ENCODE measurements at regions of chr12 and their contacts with region 1.

Region 1: GRCh38 chr12:44930972-44931600 is 55.0 kb upstream of the NELL2 start:
- DNase-seq: peak; percentile 86
- H3K4me3 ChIP-seq: no peak overlapping the region
- H3K27ac ChIP-seq: no peak overlapping the region
- H3K4me1 ChIP-seq: no peaks in the 10 kb centered on the region
- CTCF ChIP-seq: peak; percentile 92

Region 2: DNA sequence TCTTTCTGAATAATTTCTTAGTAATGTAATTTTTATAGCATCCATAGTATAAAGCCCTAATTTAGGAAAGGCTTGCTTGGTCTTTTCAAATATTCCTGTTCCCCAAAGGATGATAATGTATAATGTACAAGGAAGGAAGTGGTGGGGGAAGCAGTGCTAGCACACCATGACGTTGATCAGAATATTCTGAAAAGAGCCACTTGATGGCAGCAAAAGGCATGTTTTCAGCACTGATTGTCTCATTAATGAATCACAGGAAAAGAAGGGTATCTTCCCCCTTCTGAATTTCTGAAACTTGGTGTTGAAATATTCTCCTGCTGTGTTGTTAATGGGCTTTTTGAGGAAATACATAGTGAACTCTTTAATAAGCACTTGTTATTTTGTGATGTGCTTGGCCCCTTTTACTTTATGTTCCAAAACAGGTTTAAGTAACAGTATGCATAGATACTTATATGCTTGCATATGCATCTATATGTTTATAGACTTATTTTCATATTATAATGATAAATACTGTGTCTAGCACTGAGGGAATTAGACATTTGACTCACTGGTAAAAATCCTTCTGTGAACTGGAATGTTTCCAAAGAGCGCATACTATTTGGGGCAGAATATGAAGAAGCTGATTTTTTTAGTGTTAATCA is 973.2 kb before region 1 on chr12:
- CTCF ChIA-PET with region 1: no interaction called
- POLR2A ChIA-PET with region 1: no interaction called
- intact Hi-C with region 1: loop called (anchors 5 kb)
- DNase-seq: peak; percentile 46
- H3K4me3 ChIP-seq: no peak overlapping the region
- H3K27ac ChIP-seq: no peak overlapping the region
- H3K4me1 ChIP-seq: no peaks in the 10 kb centered on the region
- CTCF ChIP-seq: peak; percentile 79

Region 3: DNA sequence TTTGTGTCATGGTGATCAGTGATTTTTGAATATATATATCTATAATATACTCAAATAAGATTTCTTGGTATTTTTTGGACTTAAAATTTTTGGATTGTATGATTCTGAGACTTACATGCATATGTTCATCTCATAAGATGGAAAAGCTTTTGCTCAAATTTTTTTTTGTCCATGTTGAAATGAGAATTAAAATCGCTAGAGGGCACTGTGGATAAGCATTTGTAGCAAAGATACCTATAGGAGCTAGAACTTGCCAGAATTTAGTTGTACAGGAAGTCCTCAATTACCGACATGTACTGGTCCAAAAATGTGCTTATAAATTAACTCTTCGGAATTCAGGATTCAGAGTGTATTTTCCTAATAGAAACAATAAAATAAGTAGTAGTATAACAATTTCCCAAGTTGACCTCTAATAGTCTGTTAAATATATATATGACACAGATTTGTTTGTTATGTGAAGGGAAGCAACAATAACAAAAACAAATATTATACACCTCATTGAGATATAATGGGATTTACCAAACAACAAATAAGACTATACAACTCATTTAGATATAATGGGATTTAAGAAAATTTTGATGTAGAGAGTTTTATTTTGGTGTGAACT is 915.6 kb before region 1 on chr12:
- CTCF ChIA-PET with region 1: no interaction called
- POLR2A ChIA-PET with region 1: no interaction called
- intact Hi-C with region 1: loop called (anchors 2 kb)
- DNase-seq: peak; percentile 61
- H3K4me3 ChIP-seq: no peak overlapping the region
- H3K27ac ChIP-seq: no peak overlapping the region
- H3K4me1 ChIP-seq: no peaks in the 10 kb centered on the region
- CTCF ChIP-seq: peak; percentile 89

Region 4: GRCh38 chr12:44307506-44308168 is 623.4 kb before region 1 on chr12:
- CTCF ChIA-PET with region 1: no interaction called
- POLR2A ChIA-PET with region 1: no interaction called
- intact Hi-C with region 1: loop called (anchors 10 kb)
- DNase-seq: no peak
- H3K4me3 ChIP-seq: no peak overlapping the region
- H3K27ac ChIP-seq: no peak overlapping the region
- H3K4me1 ChIP-seq: no peaks in the 10 kb centered on the region
- CTCF ChIP-seq: no peak

Region 5: GRCh38 chr12:44497042-44497441 is 434.0 kb before region 1 on chr12:
- CTCF ChIA-PET with region 1: no interaction called
- POLR2A ChIA-PET with region 1: interaction called, 3 read pairs
- intact Hi-C with region 1: loop called (anchors 10 kb)
- DNase-seq: peak; percentile 12
- H3K4me3 ChIP-seq: no peak overlapping the region
- H3K27ac ChIP-seq: no peak overlapping the region
- H3K4me1 ChIP-seq: no peaks in the 10 kb centered on the region
- CTCF ChIP-seq: peak; percentile 65

Region 6: GRCh38 chr12:44589697-44590096 is 341.4 kb before region 1 on chr12:
- CTCF ChIA-PET with region 1: no interaction called
- POLR2A ChIA-PET with region 1: no interaction called
- intact Hi-C with region 1: no loop called
- DNase-seq: no peak
- H3K4me3 ChIP-seq: no peak overlapping the region
- H3K27ac ChIP-seq: no peak overlapping the region
- H3K4me1 ChIP-seq: no peaks in the 10 kb centered on the region
- CTCF ChIP-seq: no peak

Region 7: GRCh38 chr12:44774815-44775411 is 156.2 kb before region 1 on chr12:
- CTCF ChIA-PET with region 1: no interaction called
- POLR2A ChIA-PET with region 1: no interaction called
- intact Hi-C with region 1: loop called (anchors 2 kb)
- DNase-seq: peak; percentile 47
- H3K4me3 ChIP-seq: no peak overlapping the region
- H3K27ac ChIP-seq: no peak overlapping the region
- H3K4me1 ChIP-seq: no peaks in the 10 kb centered on the region
- CTCF ChIP-seq: peak; percentile 93

Region 8: DNA sequence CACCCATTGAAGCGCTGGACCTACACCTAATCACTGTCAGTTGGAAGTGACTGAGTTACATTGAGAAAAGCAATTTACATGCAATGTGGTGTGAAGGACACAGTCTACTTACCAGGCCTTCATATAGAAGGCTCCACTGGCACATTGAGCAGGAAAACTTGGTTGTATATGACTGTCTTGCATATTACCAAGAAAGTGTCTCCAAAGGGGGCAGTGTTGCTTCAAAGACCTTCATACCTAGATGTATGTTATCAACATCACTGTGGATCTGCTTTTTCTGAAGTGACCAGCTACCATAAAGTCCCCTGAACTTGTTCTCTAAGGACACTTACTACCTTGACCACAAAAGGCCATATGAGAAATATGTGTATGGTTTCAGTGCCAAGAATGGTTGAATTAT is 119.0 kb before region 1 on chr12:
- CTCF ChIA-PET with region 1: interaction called, 3 read pairs
- POLR2A ChIA-PET with region 1: no interaction called
- intact Hi-C with region 1: loop called (anchors 2 kb)
- DNase-seq: peak; percentile 77
- H3K4me3 ChIP-seq: no peak overlapping the region
- H3K27ac ChIP-seq: no peak overlapping the region
- H3K4me1 ChIP-seq: no peaks in the 10 kb centered on the region
- CTCF ChIP-seq: peak; percentile 82

Region 9: DNA sequence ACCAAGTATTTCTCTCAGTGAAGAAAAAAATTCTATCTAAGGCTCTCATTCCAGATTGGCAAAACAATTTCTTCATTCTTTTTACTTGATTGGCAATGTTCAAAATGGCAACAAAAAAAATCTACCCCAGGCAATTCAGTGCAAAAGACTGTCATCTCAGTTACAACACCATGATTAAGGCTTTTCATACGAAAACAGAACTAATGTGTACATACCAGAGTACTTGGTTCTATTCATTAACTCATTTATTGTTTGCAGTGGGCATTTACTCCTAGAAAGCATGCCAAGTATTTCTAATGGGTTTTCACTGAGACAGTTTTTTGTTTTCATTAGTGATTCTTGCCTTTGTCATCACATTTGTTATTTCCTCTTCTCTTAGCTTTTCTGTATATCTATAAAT is 86.8 kb after region 1 on chr12:
- CTCF ChIA-PET with region 1: no interaction called
- POLR2A ChIA-PET with region 1: no interaction called
- intact Hi-C with region 1: no loop called
- DNase-seq: no peak
- H3K4me3 ChIP-seq: no peak overlapping the region
- H3K27ac ChIP-seq: no peak overlapping the region
- H3K4me1 ChIP-seq: no peaks in the 10 kb centered on the region
- CTCF ChIP-seq: no peak